A673 (cell line): ENCODE measurements at regions of chr7 and their contacts with region 1.

Region 1: GRCh38 chr7:128883622-128884501 is 21.2 kb downstream of the ATP6V1F start:
- DNase-seq: peak; percentile 89
- H3K4me3 ChIP-seq: no peak overlapping the region
- H3K27ac ChIP-seq: no peak overlapping the region
- H3K4me1 ChIP-seq: no peaks in the 10 kb centered on the region
- H3K27me3 ChIP-seq: no peaks in the 10 kb centered on the region
- CTCF ChIP-seq: peak; percentile 97

Region 2: GRCh38 chr7:128791121-128791961 is 92.5 kb before region 1 on chr7:
- CTCF ChIA-PET with region 1: no interaction called
- POLR2A ChIA-PET with region 1: no interaction called
- intact Hi-C with region 1: loop called (anchors 10 kb)
- DNase-seq: peak; percentile 67
- H3K4me3 ChIP-seq: peak overlapping the region; percentile 77
- H3K27ac ChIP-seq: no peak overlapping the region
- H3K4me1 ChIP-seq: no peaks in the 10 kb centered on the region
- H3K27me3 ChIP-seq: peaks cover 11% of the 10 kb centered on the region
- CTCF ChIP-seq: no peak

Region 3: DNA sequence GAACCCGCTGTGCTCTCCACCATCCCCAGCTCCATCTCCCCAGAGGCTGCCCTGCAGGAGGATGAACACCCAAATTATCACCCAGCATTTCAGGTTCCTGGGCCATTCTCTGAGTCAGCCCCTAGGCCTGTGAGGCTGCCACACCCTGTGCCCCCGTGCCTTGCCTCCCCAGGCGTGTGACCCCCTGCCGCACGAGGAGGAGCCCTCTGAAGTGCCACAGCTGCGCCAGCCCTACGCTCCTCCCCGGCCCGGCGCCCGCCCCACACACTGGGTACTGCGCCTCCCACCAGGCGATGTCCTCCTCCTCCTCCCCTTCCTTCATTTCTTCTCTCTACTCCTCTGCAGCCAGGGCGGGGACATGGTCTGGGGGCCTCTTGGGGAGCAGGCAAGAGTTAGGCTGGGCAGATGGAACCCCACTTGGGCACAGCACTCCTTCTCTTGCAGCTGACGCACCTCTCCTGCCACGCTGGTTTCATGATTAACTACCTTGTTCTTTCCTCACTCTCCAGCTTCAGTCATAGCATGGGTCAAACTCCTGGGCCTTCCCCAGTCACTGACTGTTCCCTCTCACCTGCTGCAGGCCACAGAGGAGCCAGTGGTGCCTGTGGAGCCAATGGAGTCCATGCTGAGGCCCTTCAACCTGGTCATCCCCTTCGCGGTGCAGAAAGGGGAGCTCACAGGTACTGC is 33.9 kb before region 1 on chr7:
- CTCF ChIA-PET with region 1: no interaction called
- POLR2A ChIA-PET with region 1: no interaction called
- intact Hi-C with region 1: no loop called
- DNase-seq: no peak
- H3K4me3 ChIP-seq: no peak overlapping the region
- H3K27ac ChIP-seq: no peak overlapping the region
- H3K4me1 ChIP-seq: no peaks in the 10 kb centered on the region
- H3K27me3 ChIP-seq: no peaks in the 10 kb centered on the region
- CTCF ChIP-seq: no peak

Region 4: DNA sequence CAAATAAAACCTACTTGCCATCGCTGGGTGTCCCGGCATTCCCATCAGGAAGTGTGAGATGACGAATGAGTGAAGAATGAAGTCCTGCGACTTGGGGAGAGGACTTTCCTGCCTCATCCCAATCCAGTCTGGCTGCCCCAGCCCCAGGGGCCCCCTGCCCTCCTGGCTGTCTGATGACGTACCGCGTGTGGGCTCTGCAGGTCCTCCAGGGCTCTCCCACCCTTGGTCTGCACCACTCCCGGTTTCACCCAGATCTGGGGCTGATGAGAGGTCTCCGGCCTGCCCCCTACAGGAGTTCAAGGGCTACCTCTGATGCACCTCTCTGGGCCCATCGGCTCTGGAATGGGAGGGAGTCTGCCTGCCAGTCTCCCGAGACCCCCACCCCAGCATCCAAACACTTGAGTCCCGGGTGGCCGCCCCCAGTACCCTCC is 11.5 kb before region 1 on chr7:
- CTCF ChIA-PET with region 1: interaction called, 12 read pairs
- POLR2A ChIA-PET with region 1: no interaction called
- intact Hi-C with region 1: no loop called
- DNase-seq: no peak
- H3K4me3 ChIP-seq: no peak overlapping the region
- H3K27ac ChIP-seq: no peak overlapping the region
- H3K4me1 ChIP-seq: no peaks in the 10 kb centered on the region
- H3K27me3 ChIP-seq: no peaks in the 10 kb centered on the region
- CTCF ChIP-seq: 0 out of 2 replicates have a peak, but pooled peaks have one; percentile 22

Region 5: GRCh38 chr7:130393101-130393561 is 1509.3 kb after region 1 on chr7:
- CTCF ChIA-PET with region 1: no interaction called
- POLR2A ChIA-PET with region 1: no interaction called
- intact Hi-C with region 1: no loop called
- DNase-seq: no peak
- H3K4me3 ChIP-seq: no peak overlapping the region
- H3K27ac ChIP-seq: no peak overlapping the region
- H3K4me1 ChIP-seq: peaks cover 30% of the 10 kb centered on the region
- H3K27me3 ChIP-seq: no peaks in the 10 kb centered on the region
- CTCF ChIP-seq: no peak